ENCODE measurements at regions of chr6 and their contacts with region 1.

Region 1: DNA sequence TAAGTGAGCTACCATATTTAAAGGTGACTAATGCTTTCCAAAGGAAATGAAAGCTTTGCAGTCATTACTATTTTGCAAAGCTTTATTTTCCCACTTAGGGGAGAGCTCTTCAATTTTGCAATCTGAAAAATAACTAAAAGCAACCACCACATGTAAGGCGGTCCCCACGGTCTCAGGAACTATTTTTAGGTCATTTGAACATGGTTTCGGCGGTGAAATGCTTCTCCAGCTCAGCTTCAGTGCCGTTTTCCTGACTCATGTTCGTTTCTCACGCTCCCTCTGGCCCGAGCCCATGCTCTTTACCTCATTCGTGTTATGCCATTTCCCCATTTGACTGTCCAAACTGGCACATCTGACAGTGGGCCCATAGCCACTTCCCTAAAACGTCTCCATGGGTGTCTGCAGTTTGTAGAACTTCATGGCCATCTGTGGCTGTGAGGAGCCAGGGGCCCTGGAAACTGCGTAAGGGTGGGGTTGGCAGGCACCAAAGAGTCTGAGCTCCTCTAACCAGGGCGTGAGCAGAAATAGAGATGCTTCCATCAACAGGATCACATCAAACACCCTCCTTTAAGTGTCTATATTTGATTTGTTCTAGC is 46.5 kb downstream of the ADTRP start:
- DNase-seq: peak; percentile 98 to 100 (median 99)
- H3K4me3 ChIP-seq: peak overlapping the region in 1 of 3 experiments; percentile 49
- H3K4me3 Mint-ChIP-seq: peak overlapping the region; percentile 38 to 81
- H3K27ac ChIP-seq: peak overlapping the region; percentile 67 to 88
- H3K27ac Mint-ChIP-seq: peak overlapping the region; percentile 94 to 98 (median 96)
- H3K4me1 ChIP-seq: peaks cover 46 to 49% of the 10 kb centered on the region in 2 donors
- H3K4me1 Mint-ChIP-seq: peaks cover 59% of the 10 kb centered on the region
- H3K27me3 ChIP-seq: peaks cover 3% of the 10 kb centered on the region in 2 donors
- H3K27me3 Mint-ChIP-seq: peaks cover 6 to 14% (median 13%) of the 10 kb centered on the region in 3 donors
- CTCF ChIP-seq: no peak

Region 2: GRCh38 chr6:11754625-11755271 is 22.6 kb after region 1 on chr6:
- intact Hi-C with region 1: no loop called
- DNase-seq: no peak
- H3K4me3 ChIP-seq: no peak overlapping the region
- H3K4me3 Mint-ChIP-seq: no peak overlapping the region
- H3K27ac ChIP-seq: no peak overlapping the region
- H3K27ac Mint-ChIP-seq: no peak overlapping the region
- H3K4me1 ChIP-seq: no peaks in the 10 kb centered on the region
- H3K4me1 Mint-ChIP-seq: no peaks in the 10 kb centered on the region
- H3K27me3 ChIP-seq: no peaks in the 10 kb centered on the region
- H3K27me3 Mint-ChIP-seq: peaks cover 0 to 2% (median 1%) of the 10 kb centered on the region in 3 donors
- CTCF ChIP-seq: no peak

Region 3: DNA sequence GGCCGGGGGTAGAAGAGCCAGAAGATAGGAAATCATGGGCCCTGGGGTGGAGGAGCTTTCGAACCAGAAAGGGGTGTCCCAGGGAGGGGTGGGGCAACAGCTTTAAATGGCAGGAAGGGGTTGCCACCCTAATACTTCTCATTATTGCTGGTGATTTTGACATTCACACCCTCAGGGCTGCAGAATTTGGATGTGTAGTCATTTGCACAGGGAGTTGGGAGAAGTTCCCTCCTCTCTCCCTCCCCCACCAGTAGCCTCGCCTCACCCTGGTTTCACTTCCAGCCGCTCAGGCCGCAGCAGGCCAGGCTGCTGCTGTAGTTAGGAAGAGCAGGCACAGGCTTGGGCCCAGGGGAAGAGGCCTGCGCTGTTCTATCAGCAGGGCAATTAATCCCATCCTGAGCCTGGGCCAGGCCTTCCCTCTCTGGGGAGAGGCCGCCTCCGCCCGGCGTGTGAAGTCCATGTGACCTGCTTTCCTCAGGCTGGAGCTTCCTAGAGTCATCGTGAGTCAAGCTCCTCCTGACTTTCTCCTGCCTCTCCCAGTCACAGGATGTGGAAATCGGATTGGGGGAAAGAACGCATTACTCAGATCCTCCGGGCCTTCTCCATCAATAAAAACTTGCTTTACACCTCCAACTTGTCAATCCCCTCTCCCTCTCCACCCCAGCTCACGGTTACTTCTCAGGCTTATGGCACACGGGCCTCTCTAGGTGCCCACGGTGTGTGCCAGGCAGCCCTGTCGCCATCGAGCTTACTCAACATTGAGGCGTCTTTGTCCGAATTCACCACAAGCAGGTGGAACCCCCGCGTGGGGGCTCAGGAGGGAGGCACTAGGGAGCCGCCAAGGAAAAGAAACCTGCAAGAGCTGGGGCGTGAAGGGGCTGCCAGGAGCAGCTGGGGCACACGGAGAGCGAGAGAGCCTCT is 38.7 kb after region 1 on chr6:
- intact Hi-C with region 1: loop called (anchors 2 to 5 kb)
- DNase-seq: peak; percentile 81 to 99 (median 87)
- H3K4me3 ChIP-seq: peak overlapping the region in 1 of 3 experiments; percentile 43
- H3K4me3 Mint-ChIP-seq: peak overlapping the region in 1 of 2 donors; percentile 75
- H3K27ac ChIP-seq: peak overlapping the region; percentile 82
- H3K27ac Mint-ChIP-seq: peak overlapping the region; percentile 81 to 98 (median 89)
- H3K4me1 ChIP-seq: peaks cover 41 to 52% of the 10 kb centered on the region in 2 donors
- H3K4me1 Mint-ChIP-seq: peaks cover 50% of the 10 kb centered on the region
- H3K27me3 ChIP-seq: no peaks in the 10 kb centered on the region
- H3K27me3 Mint-ChIP-seq: peaks cover 0 to 5% (median 2%) of the 10 kb centered on the region in 3 donors
- CTCF ChIP-seq: no peak

Region 4: GRCh38 chr6:12011276-12012076 is 279.3 kb after region 1 on chr6:
- intact Hi-C with region 1: loop called in 1 of 2 experiments (anchors 1 kb)
- DNase-seq: peak; percentile 94 to 99 (median 97)
- H3K4me3 ChIP-seq: peak overlapping the region in 2 of 3 experiments; percentile 54 to 95
- H3K4me3 Mint-ChIP-seq: peak overlapping the region; percentile 26 to 85
- H3K27ac ChIP-seq: peak overlapping the region in 1 of 2 donors; percentile 97
- H3K27ac Mint-ChIP-seq: peak overlapping the region in 6 of 7 donors; percentile 86 to 98 (median 96)
- H3K4me1 ChIP-seq: peaks cover 20 to 30% of the 10 kb centered on the region in 2 donors
- H3K4me1 Mint-ChIP-seq: peaks cover 35% of the 10 kb centered on the region
- H3K27me3 ChIP-seq: no peaks in the 10 kb centered on the region
- H3K27me3 Mint-ChIP-seq: peaks cover 0 to 5% (median 5%) of the 10 kb centered on the region in 3 donors
- CTCF ChIP-seq: no peak

Region 5: GRCh38 chr6:12051861-12052368 is 319.8 kb after region 1 on chr6:
- intact Hi-C with region 1: loop called in 1 of 2 experiments (anchors 10 kb)
- DNase-seq: peak; percentile 83 to 97 (median 84)
- H3K4me3 ChIP-seq: peak overlapping the region in 1 of 3 experiments; percentile 38
- H3K4me3 Mint-ChIP-seq: peak overlapping the region in 1 of 2 donors; percentile 55
- H3K27ac ChIP-seq: peak overlapping the region in 1 of 2 donors; percentile 80
- H3K27ac Mint-ChIP-seq: peak overlapping the region; percentile 89 to 97 (median 93)
- H3K4me1 ChIP-seq: peaks cover 56 to 61% of the 10 kb centered on the region in 2 donors
- H3K4me1 Mint-ChIP-seq: peaks cover 59% of the 10 kb centered on the region
- H3K27me3 ChIP-seq: no peaks in the 10 kb centered on the region
- H3K27me3 Mint-ChIP-seq: no peaks in the 10 kb centered on the region
- CTCF ChIP-seq: no peak